Heart left ventricle (tissue), 16 donors: ENCODE measurements at regions of chr1 and their contacts with region 1.

Region 1: GRCh38 chr1:155893389-155894142 is 17.6 kb downstream of the RIT1 start:
- DNase-seq: peak in 1 of 5 donors; percentile 46
- ATAC-seq: peak; percentile 68 to 93 (median 79)
- H3K4me3 ChIP-seq: no peak overlapping the region
- H3K27ac ChIP-seq: peak overlapping the region; percentile 55 to 86 (median 79)
- H3K4me1 ChIP-seq: peaks cover 0 to 34% (median 13%) of the 10 kb centered on the region in 12 donors
- H3K27me3 ChIP-seq: no peaks in the 10 kb centered on the region
- CTCF ChIP-seq: no peak
- POLR2A ChIP-seq: no peak

Region 2: DNA sequence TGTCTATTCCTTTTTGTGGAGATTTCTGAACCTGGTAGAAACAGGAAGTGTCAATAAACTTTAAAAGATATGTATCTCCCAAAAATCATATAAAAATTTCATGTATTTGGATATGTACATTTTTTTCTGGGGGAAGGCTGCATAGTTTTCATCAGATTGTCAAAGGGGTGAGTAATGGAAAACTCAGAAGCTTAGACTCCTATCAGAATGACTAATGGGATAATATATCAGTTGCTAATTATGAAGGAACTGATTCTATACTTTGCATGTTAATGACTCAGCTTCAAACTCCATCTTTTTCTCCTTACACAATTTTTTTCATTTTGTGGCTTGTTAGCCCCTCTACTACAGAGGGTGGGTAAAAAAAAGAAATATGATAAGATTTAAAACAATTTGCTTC is 92.4 kb before region 1 on chr1:
- intact Hi-C with region 1: loop called in 1 of 10 experiments (anchors 10 kb)
- DNase-seq: no peak
- ATAC-seq: no peak
- H3K4me3 ChIP-seq: no peak overlapping the region
- H3K27ac ChIP-seq: no peak overlapping the region
- H3K4me1 ChIP-seq: no peaks in the 10 kb centered on the region
- H3K27me3 ChIP-seq: no peaks in the 10 kb centered on the region
- CTCF ChIP-seq: no peak
- POLR2A ChIP-seq: no peak